Activated CD8-positive, alpha-beta T cell treated with anti-CD3 and anti-CD28 coated beads, Interleukin-2, amount 10 ng/mL, durations not matched to agents 7 days and 5 days (primary cell): ENCODE measurements at regions of chr7 and their contacts with region 1.

Region 1: GRCh38 chr7:151028131-151028947 is at the start of gene ABCB8:
- DNase-seq: peak; percentile 99
- ATAC-seq: peak; percentile 98
- H3K4me3 Mint-ChIP-seq: peak within 1 kb of the TSS; percentile 94
- H3K27ac Mint-ChIP-seq: peak within 1 kb of the TSS; percentile 96
- H3K4me1 Mint-ChIP-seq: peaks cover 21% of the 10 kb centered on the region
- H3K27me3 Mint-ChIP-seq: peaks cover 4% of the 10 kb centered on the region
- total RNA-seq, gene ABCB8: 48.0 to 49.5 TPM

Region 2: GRCh38 chr7:151008511-151009323 is 19.6 kb before region 1 on chr7:
- CTCF ChIA-PET with region 1: interaction called, 23 read pairs
- POLR2A ChIA-PET with region 1: interaction called, 3 read pairs
- DNase-seq: peak; percentile 83
- ATAC-seq: peak; percentile 62
- H3K4me3 Mint-ChIP-seq: peak overlapping the region; percentile 76
- H3K27ac Mint-ChIP-seq: peak overlapping the region; percentile 83
- H3K4me1 Mint-ChIP-seq: peaks cover 62% of the 10 kb centered on the region
- H3K27me3 Mint-ChIP-seq: no peaks in the 10 kb centered on the region

Region 3: DNA sequence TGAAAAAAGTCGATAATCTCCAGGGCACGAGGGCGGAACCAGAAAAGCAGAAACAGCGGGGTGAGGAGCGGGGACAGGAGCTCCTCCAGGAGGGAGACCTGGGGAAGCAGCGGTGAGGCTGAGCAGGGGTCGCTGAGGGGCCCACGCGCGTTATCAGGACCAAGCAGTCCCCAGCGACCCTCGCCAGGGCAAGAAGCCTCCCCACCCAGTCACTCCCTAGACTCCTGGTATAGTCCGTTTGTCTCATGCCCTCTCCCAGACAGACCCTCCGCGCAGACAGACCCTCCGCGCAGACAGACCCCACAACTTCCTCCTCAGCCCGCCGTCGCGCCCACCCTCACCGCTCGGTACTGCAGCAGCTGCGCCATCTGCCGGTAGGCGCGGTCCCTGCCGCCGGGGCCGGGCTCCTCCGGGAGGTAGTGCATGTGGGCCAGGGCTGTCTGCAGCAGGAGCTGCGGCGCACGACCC is 10.4 kb before region 1 on chr7:
- CTCF ChIA-PET with region 1: interaction called, 53 read pairs
- POLR2A ChIA-PET with region 1: interaction called, 10 read pairs
- DNase-seq: peak; percentile 83
- ATAC-seq: peak; percentile 62
- H3K4me3 Mint-ChIP-seq: peak overlapping the region; percentile 69
- H3K27ac Mint-ChIP-seq: peak overlapping the region; percentile 65
- H3K4me1 Mint-ChIP-seq: peaks cover 59% of the 10 kb centered on the region
- H3K27me3 Mint-ChIP-seq: peaks cover 28% of the 10 kb centered on the region

Region 4: GRCh38 chr7:151085691-151086620 is 57.6 kb after region 1 on chr7 and contains the start of gene AGAP3:
- CTCF ChIA-PET with region 1: interaction called, 10 read pairs
- POLR2A ChIA-PET with region 1: interaction called, 3 read pairs
- DNase-seq: peak; percentile 54
- ATAC-seq: peak; percentile 25
- H3K4me3 Mint-ChIP-seq: peak within 1 kb of the TSS; percentile 80
- H3K27ac Mint-ChIP-seq: peak within 1 kb of the TSS; percentile 82
- H3K4me1 Mint-ChIP-seq: peaks cover 48% of the 10 kb centered on the region
- H3K27me3 Mint-ChIP-seq: peaks cover 30% of the 10 kb centered on the region
- total RNA-seq, gene AGAP3: 12.1 to 12.6 TPM

Region 5: GRCh38 chr7:151110941-151111645 is 82.8 kb after region 1 on chr7:
- CTCF ChIA-PET with region 1: interaction called, 13 read pairs
- POLR2A ChIA-PET with region 1: no interaction called
- DNase-seq: peak; percentile 83
- ATAC-seq: peak; percentile 84
- H3K4me3 Mint-ChIP-seq: no peak overlapping the region
- H3K27ac Mint-ChIP-seq: no peak overlapping the region
- H3K4me1 Mint-ChIP-seq: peaks cover 8% of the 10 kb centered on the region
- H3K27me3 Mint-ChIP-seq: peaks cover 20% of the 10 kb centered on the region